ENCODE measurements at regions of chr3 and their contacts with region 1.

Region 1: DNA sequence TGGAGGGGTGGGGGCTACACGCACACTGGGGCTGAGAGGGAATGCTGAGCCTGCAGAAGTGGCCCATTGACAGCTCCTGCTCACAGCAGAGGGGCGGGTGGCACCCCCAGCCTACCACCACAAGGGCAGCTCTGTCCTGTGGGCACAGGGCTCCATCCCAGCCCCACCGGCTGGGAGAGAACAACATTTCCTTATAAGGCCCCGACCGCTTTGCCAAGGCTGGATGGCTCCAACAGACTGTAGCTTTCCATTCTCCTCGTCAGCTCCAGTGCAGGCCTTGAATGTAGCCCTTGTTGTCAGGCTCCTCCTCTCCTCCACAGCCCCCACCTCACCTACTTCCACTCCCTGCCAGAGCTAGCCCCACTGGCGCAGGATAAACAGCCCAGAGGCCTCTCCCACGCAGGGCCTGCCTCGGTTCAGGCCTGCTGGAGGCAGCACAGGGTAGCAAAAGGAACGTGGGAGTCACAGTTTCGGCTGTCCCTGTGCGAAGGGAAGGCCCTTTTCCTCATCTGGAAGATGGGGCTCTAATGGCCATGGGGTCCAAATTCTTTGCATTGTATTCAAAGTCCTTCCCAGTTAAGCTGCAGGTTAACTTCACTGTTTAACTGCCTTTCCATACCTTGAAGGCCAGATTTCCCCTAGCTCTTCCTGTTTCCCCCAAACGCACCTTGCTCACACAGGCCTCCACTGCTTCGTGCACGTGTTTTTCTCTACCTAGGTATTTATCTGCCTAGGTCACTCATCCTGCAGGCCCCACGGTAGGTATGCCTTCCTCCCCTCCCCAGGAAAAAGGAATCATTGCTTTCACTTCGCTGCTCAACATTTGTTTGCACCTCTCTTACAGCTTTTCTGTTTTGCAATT is 101.6 kb upstream of the LPP start:
- DNase-seq: peak; percentile 90
- ATAC-seq: peak; percentile 96
- H3K4me3 ChIP-seq: peak overlapping the region; percentile 10 to 51 (median 26); a peak in 4 of 6 replicates
- H3K27ac ChIP-seq: peak overlapping the region; percentile 72
- H3K4me1 ChIP-seq: peaks cover 76% of the 10 kb centered on the region
- H3K27me3 ChIP-seq: no peaks in the 10 kb centered on the region
- CTCF ChIP-seq: peak; percentile 86
- EP300 ChIP-seq: peak; percentile 62 to 71
- POLR2A ChIP-seq: peak; percentile 54 to 55; a peak in 2 of 4 replicates
- RAD21 ChIP-seq: peak; percentile 76

Region 2: DNA sequence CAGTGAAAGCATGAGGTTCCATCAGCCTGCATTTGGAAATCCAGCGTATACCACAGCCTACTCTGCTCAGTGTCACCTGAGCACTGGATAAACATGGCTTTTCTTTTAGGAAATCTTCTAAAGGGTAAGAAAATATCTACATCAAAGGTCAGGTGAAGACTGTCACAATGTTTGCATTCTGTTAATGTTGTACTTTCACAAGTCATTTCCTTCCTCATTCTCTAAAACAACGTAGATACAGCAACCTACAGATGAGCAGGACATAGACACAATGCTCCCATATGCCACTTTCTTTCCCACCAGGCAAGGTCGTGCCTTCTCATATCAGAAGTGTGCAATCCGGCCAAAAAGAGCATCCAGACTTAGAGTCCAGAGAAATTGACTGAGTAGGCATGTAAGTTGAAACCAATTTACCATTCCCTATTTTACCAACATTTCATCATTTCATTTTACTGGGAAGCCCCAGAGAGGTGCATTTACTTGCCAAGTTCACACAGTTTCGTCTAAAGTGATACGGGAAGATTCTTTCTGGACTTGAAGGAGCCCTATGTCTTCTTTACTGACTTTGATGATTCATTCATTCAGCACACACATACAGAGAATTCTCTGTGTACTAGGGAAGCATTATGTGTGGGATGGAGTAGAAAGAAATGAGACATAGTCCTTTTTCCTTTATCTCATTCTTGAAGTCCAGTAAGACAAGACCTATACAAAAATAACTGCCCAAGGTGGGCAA is 70.9 kb after region 1 on chr3:
- CTCF ChIA-PET with region 1: no interaction called
- POLR2A ChIA-PET with region 1: no interaction called
- in situ Hi-C with region 1: no loop called
- intact Hi-C with region 1: loop called (anchors 2 kb)
- DNase-seq: peak; percentile 95
- ATAC-seq: peak; percentile 91
- H3K4me3 ChIP-seq: peak overlapping the region in 2 of 3 experiments; percentile 20 to 25; a peak in 1 of 6 replicates
- H3K27ac ChIP-seq: peak overlapping the region; percentile 73
- H3K4me1 ChIP-seq: peaks cover 63% of the 10 kb centered on the region
- H3K27me3 ChIP-seq: no peaks in the 10 kb centered on the region
- CTCF ChIP-seq: no peak
- EP300 ChIP-seq: peak in 1 of 2 experiments; percentile 94; a peak in 2 of 4 replicates
- POLR2A ChIP-seq: peak; percentile 41 to 80; a peak in 2 of 4 replicates
- RAD21 ChIP-seq: no peak

Region 3: GRCh38 chr3:188270423-188270972 is 218.1 kb after region 1 on chr3:
- CTCF ChIA-PET with region 1: no interaction called
- POLR2A ChIA-PET with region 1: no interaction called
- in situ Hi-C with region 1: no loop called
- intact Hi-C with region 1: no loop called
- DNase-seq: peak; percentile 89
- ATAC-seq: peak; percentile 95
- H3K4me3 ChIP-seq: no peak overlapping the region
- H3K27ac ChIP-seq: no peak overlapping the region
- H3K4me1 ChIP-seq: peaks cover 84% of the 10 kb centered on the region
- H3K27me3 ChIP-seq: no peaks in the 10 kb centered on the region
- CTCF ChIP-seq: no peak
- EP300 ChIP-seq: peak in 1 of 2 experiments; percentile 73; a peak in 2 of 4 replicates
- POLR2A ChIP-seq: no peak
- RAD21 ChIP-seq: no peak